ENCODE measurements at regions of chr3 and their contacts with region 1.

Region 1: DNA sequence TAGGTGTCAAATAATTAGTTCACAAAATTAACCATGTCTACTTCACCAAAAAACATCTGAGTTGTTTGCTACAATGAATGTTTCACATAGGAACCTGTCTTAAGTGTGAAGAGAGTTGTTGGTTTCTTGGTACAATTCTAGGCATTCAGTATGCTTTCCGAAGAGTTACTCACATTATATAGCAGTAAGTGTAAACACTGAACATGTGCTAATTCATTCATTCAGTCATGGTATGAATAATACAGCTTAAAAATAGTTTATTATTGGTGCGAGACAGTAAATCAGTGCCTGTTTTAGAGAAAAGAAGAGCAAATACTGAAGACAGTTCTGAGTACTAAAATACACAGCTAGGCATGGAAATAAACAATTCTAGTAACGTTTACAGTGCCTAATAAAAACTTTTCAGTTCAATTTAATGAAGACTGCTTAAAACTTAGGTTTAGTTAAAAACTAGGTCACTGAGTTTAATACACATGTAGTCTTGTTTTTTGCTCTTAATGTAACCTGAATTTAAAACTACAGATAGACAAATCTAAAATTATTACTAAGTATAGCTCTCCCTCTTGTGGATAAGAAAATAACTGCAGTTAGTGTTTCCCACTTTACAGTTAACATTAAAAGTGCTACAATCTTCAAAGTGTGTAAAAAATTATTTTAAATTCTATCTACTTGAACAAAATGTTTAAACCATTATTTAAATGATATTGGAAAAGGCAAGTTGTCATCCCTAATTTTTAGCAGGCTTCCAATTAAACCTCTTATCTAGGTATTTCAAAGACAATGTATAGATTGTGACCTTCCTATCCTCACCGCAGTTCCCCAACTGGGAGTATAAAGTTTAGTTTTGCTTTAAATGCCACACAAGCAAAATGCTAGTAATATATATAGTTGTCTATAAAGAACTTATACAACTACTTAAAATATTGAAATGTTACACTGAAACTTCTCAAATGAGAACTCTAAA is 20.1 kb upstream of the ZCWPW2 start:
- DNase-seq: peak in 1 of 2 experiments; percentile 8
- H3K4me3 ChIP-seq: no peak overlapping the region
- H3K4me3 Mint-ChIP-seq: no peak overlapping the region
- H3K27ac Mint-ChIP-seq: no peak overlapping the region
- H3K4me1 ChIP-seq: no peaks in the 10 kb centered on the region
- H3K4me1 Mint-ChIP-seq: no peaks in the 10 kb centered on the region
- H3K27me3 ChIP-seq: no peaks in the 10 kb centered on the region
- H3K27me3 Mint-ChIP-seq: no peaks in the 10 kb centered on the region
- CTCF ChIP-seq: peak in 1 of 2 experiments; percentile 54

Region 2: GRCh38 chr3:28279770-28280169 is 48.7 kb before region 1 on chr3:
- CTCF ChIA-PET with region 1: no interaction called
- POLR2A ChIA-PET with region 1: no interaction called
- intact Hi-C with region 1: no loop called
- DNase-seq: no peak
- H3K4me3 ChIP-seq: no peak overlapping the region
- H3K4me3 Mint-ChIP-seq: no peak overlapping the region
- H3K27ac Mint-ChIP-seq: no peak overlapping the region
- H3K4me1 ChIP-seq: no peaks in the 10 kb centered on the region
- H3K4me1 Mint-ChIP-seq: no peaks in the 10 kb centered on the region
- H3K27me3 ChIP-seq: no peaks in the 10 kb centered on the region
- H3K27me3 Mint-ChIP-seq: no peaks in the 10 kb centered on the region
- CTCF ChIP-seq: no peak

Region 3: DNA sequence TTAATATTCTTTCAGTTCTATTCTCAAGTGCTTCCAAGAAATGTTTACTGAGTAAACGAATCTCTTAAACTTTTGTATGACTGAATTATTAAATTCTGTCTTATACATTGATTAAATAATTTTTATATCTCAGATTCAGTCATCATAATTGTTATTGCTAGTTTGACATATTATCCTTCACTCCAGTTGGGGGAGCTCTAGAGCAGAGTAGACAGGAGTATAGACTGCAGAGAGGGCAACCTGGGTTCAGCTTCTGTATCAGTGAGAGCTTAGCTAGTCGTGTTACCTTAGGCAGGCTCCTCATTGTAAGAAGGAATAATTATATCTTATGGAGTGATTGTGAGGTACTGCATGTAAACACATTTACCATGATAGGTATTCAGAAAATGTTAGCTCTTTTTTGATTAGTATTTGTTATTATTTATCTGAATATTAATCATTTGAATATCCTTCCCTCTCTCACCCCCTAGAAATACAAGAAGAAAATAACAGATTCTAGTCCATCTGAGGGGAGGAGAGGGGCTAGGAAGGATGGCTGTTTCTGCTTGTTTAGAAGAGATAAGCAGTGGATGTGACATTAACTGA is 10.9 kb before region 1 on chr3:
- CTCF ChIA-PET with region 1: interaction called, 14 read pairs
- POLR2A ChIA-PET with region 1: no interaction called
- intact Hi-C with region 1: no loop called
- DNase-seq: peak in 1 of 2 experiments; percentile 53
- H3K4me3 ChIP-seq: no peak overlapping the region
- H3K4me3 Mint-ChIP-seq: no peak overlapping the region
- H3K27ac Mint-ChIP-seq: no peak overlapping the region
- H3K4me1 ChIP-seq: peaks cover 6% of the 10 kb centered on the region; the same call in 1 of the 2 replicates
- H3K4me1 Mint-ChIP-seq: peaks cover 11% of the 10 kb centered on the region
- H3K27me3 ChIP-seq: no peaks in the 10 kb centered on the region
- H3K27me3 Mint-ChIP-seq: no peaks in the 10 kb centered on the region
- CTCF ChIP-seq: peak; percentile 40 to 70

Measured in Caco-2 (cell line).